ENCODE measurements at regions of chr4 and their contacts with region 1.

Region 1: DNA sequence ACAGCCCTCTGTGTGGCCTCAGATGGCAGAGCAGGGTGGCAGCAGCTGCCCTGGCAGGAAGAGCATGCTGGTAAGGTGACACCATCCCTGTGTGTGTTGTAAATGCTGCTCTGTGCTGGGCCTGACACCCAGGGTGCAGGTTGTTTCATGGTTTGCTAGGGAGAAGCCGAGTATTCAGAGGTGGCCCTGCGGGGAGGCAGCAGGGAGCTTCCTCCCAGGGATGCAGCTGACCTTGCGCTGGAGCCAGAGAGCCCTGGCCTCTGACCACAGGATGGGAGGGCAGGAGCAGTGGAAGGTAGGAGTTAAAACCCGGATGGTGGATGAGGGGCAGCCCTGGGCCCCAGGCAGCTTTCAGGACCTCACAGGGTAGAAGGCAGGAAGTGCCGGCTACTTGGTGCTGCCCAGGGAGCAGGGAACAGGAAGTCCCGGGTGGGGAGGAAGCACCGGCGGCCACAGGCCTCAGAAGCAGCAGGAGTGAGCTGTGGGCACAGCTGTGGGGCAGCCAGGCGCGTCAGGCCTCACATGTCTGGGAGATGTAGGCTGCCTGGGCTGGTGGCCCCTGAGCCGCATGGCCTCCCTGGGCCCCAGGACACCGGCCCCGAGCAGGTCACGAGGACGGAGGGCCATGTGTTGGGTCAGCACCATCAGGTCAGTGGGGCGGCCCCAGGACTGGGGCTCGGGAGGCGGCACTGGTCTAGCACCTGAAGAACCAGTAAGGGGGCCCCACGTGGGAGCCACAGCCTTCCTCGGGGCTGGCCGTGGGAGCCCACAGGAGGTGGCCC is 19.1 kb downstream of the SH3BP2 start:
- DNase-seq: peak; percentile 60
- H3K4me3 Mint-ChIP-seq: peak overlapping the region; percentile 96
- H3K27ac Mint-ChIP-seq: peak overlapping the region; percentile 98
- H3K4me1 Mint-ChIP-seq: peaks cover 37% of the 10 kb centered on the region
- H3K27me3 Mint-ChIP-seq: no peaks in the 10 kb centered on the region

Region 2: DNA sequence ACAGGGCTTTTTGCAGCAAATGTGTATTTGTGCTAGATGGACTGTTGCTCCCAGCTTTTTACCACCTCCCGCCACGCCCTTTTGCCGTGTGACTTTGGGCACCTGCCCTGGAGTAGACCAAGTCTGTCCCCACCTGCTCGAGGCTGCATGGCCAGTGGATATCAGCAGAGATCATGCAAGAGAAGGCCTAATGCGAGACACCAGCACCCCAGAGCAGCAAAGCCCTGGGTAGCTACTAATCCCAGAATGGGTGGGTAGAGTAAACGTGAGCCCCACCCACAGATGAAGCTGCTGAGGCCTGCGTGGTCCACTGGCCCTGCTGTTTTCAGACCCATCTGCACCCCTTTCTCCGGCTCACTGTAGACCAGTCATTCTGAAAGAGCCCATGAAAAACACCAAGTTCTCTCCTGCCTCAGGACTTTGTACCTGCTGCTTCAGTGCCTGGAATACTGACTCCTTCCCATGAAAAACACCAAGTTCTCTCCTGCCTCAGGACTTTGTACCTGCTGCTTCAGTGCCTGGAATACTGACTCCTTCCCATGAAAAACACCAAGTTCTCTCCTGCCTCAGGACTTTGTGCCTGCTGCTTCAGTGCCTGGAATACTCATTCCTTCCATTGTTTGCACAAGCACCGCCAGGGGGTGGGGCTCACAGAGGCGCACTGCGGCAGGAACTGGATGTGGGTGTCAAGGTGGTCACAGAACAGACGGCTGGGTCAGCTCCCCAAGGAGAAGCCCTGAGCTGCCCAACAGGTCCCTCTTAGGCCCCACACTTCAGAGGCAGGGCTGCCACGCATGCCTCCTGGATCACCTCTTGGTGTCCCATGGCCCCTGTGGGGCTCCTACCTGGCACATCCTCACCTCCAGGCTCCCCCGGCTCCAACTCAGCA is 50.7 kb before region 1 on chr4:
- intact Hi-C with region 1: loop called (anchors 2 kb)
- DNase-seq: no peak
- H3K4me3 Mint-ChIP-seq: no peak overlapping the region
- H3K27ac Mint-ChIP-seq: no peak overlapping the region
- H3K4me1 Mint-ChIP-seq: peaks cover 12% of the 10 kb centered on the region
- H3K27me3 Mint-ChIP-seq: no peaks in the 10 kb centered on the region

Region 3: DNA sequence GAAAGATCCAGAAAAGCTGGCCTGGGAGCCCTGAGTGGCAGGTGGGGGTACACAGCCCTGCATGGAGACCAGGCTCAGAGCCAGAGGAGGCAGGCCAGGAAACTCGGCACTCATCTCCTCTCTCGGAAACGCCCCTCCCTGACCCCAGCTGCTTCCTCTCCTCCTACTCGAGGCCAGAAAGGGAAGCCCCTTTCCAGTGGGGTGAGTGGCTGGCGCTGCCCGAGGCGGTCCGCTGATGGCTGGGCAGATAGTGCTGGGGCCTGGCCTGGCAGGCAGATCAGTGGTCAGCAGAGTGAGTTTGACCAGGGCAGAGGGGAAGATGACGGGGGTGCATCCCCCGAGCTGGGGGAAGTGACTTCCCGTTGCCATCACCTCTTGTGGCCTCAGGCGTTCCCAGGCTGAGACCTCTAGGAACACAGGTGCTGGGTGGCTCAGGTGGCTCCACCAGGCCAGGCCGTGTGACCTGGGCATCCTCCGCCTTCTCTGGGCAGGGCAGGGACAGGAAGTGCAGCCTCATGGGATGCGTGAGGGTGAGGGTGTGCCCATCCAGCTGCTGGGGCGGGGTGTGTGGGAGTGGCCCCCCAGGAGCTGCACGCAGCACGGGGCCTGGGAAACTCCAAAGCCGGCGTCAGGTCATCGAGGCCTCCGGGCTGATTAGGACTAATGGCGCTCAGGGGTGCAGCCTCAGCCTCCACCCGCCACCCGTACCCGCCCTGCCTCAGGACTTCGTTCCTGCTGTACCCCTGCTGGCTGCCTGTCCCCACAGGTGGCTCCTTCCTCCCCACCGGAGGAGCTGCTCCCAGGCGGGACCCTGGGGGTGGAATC is 13.4 kb before region 1 on chr4:
- intact Hi-C with region 1: loop called (anchors 1 kb)
- DNase-seq: peak; percentile 35
- H3K4me3 Mint-ChIP-seq: peak overlapping the region; percentile 79
- H3K27ac Mint-ChIP-seq: peak overlapping the region; percentile 87
- H3K4me1 Mint-ChIP-seq: peaks cover 51% of the 10 kb centered on the region
- H3K27me3 Mint-ChIP-seq: no peaks in the 10 kb centered on the region

Region 4: GRCh38 chr4:2849267-2850152 is 37.5 kb after region 1 on chr4:
- intact Hi-C with region 1: loop called (anchors 5 kb)
- DNase-seq: no peak
- H3K4me3 Mint-ChIP-seq: no peak overlapping the region
- H3K27ac Mint-ChIP-seq: no peak overlapping the region
- H3K4me1 Mint-ChIP-seq: peaks cover 58% of the 10 kb centered on the region
- H3K27me3 Mint-ChIP-seq: no peaks in the 10 kb centered on the region